Activated CD4-positive, alpha-beta T cell treated with anti-CD3 and anti-CD28 coated beads, Interleukin-2, amount 10 ng/mL, durations not matched to agents 24 days and 14 days (primary cell): ENCODE measurements at regions of chr17 and their contacts with region 1.

Region 1: DNA sequence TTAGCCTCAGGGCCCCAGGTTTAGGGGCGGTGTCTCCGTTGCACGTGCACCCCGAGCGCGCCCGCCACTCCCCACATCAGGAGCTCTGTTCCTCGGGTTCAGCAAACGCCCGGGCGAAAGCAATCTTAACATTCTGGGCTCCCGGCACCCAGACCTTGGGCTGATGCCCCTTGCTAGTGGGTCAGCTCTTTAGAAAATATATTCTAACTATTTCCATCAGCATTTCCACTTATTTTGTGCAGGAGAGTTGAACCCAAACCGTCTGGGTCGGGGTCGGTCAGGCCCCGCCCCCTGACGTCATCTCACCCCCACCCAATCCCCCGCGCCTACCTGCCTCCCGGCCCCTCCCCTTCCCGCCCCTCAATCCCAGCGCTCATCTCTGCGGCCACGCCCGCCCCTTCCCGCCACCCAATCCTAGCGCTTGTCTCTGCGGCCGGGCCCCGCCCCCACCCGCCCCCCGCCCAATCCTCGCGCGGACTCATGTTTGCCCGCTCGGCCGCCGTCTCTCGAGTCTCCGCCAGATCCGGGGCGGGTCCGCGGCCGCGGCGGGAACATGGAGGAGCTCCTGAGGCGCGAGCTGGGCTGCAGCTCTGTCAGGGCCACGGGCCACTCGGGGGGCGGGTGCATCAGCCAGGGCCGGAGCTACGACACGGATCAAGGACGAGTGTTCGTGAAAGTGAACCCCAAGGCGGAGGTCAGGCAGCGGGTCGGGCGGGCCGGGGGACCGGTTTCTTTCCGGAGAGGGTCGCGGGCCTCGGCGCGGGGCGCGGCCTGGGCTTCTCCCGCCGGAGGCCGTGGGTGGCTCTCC is at the start of gene FN3KRP:
- DNase-seq: peak; percentile 97
- H3K4me3 Mint-ChIP-seq: peak within 1 kb of the TSS; percentile 95
- H3K27ac Mint-ChIP-seq: peak within 1 kb of the TSS; percentile 90
- H3K4me1 Mint-ChIP-seq: peaks cover 19% of the 10 kb centered on the region
- H3K27me3 Mint-ChIP-seq: no peaks in the 10 kb centered on the region
- total RNA-seq, gene FN3KRP: 38.7 and 43.4 TPM in 2 replicates

Region 2: DNA sequence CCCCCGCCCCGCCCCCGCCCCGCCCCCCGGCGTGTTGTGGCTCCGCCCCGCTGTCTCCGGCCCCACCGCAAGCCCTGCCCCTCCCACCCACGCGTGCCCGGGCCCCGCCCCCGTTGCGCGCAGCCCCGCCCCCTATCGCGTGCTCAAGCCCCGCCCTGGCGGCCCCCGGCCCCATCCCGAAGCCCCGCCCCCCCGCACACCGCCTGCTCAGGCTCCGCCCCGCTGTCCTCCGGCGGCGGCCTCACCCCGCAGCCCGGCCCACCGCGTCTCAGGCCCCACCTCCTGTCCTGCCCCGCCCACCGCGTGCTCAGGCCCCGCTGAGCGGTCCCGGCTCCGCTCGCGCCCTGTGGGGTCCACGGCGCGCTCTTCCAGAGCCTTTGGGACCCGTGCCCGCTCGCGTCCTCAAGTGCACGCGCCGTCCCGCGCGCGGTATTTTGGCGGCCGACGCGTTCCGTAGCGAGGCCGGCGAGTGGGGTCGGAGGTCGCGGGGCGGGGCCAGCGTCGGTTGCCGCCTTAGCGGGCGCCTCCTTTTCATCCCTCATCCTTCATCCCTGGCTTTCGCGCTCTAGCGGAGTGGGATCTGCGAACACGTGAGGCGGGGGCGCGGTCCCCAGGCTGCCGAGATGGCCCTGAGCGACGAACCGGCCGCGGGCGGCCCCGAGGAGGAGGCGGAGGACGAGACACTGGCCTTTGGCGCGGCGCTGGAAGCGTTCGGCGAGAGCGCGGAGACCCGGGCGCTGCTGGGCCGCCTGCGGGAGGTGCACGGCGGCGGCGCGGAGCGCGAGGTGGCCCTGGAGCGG is 35.4 kb after region 1 on chr17 and contains the start of gene TBCD:
- intact Hi-C with region 1: loop called (anchors 1 kb)
- DNase-seq: peak; percentile 96
- H3K4me3 Mint-ChIP-seq: peak within 1 kb of the TSS; percentile 93
- H3K27ac Mint-ChIP-seq: peak within 1 kb of the TSS; percentile 87
- H3K4me1 Mint-ChIP-seq: peaks cover 24% of the 10 kb centered on the region
- H3K27me3 Mint-ChIP-seq: no peaks in the 10 kb centered on the region
- total RNA-seq, gene TBCD: 117 and 122 TPM in 2 replicates